Activated CD4-positive, alpha-beta T cell treated with anti-CD3 and anti-CD28 coated beads, Interleukin-2, amount 10 ng/mL, durations not matched to agents 24 days and 14 days (primary cell): ENCODE measurements at regions of chr4 and their contacts with region 1.

Region 1: DNA sequence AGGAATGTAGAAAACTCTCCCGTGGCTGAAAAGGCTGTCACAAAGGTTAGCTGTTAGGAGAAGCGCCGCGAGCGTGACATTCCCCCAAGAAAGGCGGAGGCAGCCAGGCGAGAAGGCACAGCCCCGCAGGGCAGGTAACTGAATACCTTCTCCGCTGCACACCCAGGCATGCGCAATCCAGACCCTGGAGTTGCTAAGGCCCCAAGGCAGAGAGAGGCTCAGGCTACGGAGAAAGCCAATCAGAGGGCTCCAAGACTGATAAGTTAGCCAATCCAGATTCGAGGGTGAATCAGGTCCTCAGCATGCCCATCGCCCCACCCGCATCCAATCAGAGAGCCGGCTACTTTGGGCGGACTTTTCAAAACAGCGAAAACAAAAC is 485 bp upstream of the CCNG2 start:
- DNase-seq: peak; percentile 99
- H3K4me3 Mint-ChIP-seq: peak overlapping the region; percentile 100
- H3K27ac Mint-ChIP-seq: peak overlapping the region; percentile 99
- H3K4me1 Mint-ChIP-seq: peaks cover 34% of the 10 kb centered on the region
- H3K27me3 Mint-ChIP-seq: peaks cover 3% of the 10 kb centered on the region

Region 2: GRCh38 chr4:77095101-77095821 is 61.3 kb before region 1 on chr4:
- intact Hi-C with region 1: loop called (anchors 1 kb)
- DNase-seq: peak; percentile 90
- H3K4me3 Mint-ChIP-seq: no peak overlapping the region
- H3K27ac Mint-ChIP-seq: no peak overlapping the region
- H3K4me1 Mint-ChIP-seq: peaks cover 11% of the 10 kb centered on the region
- H3K27me3 Mint-ChIP-seq: no peaks in the 10 kb centered on the region

Region 3: DNA sequence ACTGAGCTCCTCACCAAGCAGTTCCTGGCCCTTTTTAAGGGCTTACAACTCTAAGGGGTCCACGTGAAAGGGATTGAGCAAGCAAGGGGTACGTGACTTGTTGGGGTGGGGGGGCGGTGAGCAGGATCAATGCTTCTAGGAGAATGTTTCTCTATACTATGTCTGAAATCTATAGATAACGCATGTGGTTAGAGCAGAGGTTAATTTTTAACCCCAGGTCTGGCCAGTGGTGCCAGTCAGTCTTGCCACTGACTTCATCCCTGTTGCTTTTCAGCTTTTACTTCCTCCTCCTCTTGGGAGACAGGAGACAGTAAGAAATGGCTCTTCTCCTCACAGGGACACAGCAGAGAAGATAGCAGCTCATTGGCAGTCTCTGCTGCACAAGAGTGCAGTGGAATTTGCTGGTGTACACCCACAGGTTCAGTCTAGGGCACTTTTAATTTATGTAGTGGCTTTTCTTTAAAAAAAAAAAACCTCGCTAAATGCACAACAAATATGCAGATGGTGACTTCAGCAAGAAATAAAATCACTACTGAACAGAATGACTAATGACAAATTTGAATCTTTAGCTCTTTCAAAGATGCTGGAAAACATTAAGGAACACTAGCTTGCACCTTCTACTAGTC is 190.9 kb after region 1 on chr4:
- intact Hi-C with region 1: no loop called
- DNase-seq: no peak
- H3K4me3 Mint-ChIP-seq: no peak overlapping the region
- H3K27ac Mint-ChIP-seq: no peak overlapping the region
- H3K4me1 Mint-ChIP-seq: no peaks in the 10 kb centered on the region
- H3K27me3 Mint-ChIP-seq: peaks cover 3% of the 10 kb centered on the region